ENCODE measurements at regions of chr12 and their contacts with region 1.

Region 1: DNA sequence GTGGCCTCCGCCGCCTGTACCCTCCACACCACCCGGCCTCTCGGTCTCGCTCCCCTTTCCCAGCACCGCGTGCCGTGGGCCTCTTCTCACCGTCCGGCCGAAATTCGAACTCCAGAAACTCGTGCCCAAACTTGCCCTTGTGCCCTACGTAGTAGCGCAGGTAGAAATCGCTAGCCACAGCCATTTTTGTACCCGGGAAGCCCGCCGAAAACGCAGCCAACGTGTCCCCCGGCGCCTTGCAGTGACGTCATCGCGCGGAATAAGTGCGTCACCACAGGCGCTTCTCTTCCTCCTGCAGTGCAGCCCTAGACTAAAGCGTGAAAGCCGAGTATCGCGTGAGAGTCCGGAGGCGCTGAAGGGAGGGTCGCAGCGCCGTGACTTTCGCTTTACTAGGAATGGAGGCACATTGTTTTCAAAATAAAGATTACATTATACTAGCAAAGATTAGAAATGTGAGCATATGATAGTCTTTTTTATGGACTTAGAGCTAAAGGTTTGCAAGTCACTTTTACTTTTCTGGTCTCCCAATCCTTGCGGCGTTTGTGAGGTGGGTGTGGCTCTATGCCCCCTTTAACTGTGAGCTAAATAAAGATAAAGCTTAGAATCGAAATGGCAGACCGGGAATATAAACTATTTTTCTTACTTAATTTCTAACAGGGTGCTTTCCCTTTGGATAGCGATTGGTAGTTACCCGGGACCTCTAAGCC is at the start of gene MAGOHB:
- DNase-seq: peak; percentile 97
- H3K4me3 Mint-ChIP-seq: peak within 1 kb of the TSS; percentile 97
- H3K27ac Mint-ChIP-seq: peak within 1 kb of the TSS; percentile 99
- H3K4me1 Mint-ChIP-seq: peaks cover 36% of the 10 kb centered on the region
- H3K27me3 Mint-ChIP-seq: peaks cover 16% of the 10 kb centered on the region
- total RNA-seq, gene MAGOHB: 79.4 and 85.1 TPM in 2 replicates

Region 2: DNA sequence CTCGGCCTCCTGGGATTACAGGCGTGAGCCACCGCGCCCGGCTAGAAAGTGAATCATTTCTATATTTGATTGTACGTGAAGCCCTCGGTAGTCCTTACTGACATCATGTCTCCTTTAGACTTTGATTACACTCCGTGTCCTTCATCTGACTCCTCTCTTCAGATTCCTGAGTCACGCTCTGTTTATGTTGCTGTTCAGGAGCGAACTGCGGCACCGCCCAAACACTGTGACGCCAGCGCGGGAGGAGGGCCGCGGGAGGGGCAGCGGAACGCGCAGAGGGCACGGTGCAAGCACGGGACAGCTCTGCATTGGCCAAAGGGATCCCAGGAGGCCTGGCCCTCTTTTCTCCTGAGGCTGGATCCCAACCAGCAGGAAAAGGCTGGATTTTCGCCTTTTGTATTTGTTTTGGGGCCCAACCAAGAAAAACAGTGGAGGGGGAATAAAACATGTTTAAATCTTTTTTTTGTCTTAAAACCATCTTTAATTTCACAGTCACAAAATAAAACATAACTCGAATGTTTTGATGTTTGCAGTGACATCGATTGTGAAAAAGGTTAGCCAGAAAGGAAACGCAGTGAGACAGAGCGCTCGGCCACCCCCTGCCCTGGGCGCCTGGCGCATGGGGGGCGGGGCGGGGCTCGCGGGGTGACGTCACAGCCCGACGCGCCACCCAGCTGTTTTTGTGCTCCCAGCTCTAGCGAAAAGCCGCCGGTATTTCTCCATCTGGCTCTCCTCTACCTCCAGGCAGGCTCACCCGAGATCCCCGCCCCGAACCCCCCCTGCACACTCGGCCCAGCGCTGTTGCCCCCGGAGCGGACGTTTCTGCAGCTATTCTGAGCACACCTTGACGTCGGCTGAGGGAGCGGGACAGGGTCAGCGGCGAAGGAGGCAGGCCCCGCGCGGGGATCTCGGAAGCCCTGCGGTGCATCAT is 401.0 kb before region 1 on chr12 and contains the start of gene GABARAPL1:
- intact Hi-C with region 1: loop called (anchors 2 kb)
- DNase-seq: peak; percentile 76
- H3K4me3 Mint-ChIP-seq: peak within 1 kb of the TSS; percentile 84
- H3K27ac Mint-ChIP-seq: peak within 1 kb of the TSS; percentile 93
- H3K4me1 Mint-ChIP-seq: peaks cover 32% of the 10 kb centered on the region
- H3K27me3 Mint-ChIP-seq: peaks cover 23% of the 10 kb centered on the region
- total RNA-seq, gene GABARAPL1: 5.0 and 6.6 TPM in 2 replicates

Region 3: DNA sequence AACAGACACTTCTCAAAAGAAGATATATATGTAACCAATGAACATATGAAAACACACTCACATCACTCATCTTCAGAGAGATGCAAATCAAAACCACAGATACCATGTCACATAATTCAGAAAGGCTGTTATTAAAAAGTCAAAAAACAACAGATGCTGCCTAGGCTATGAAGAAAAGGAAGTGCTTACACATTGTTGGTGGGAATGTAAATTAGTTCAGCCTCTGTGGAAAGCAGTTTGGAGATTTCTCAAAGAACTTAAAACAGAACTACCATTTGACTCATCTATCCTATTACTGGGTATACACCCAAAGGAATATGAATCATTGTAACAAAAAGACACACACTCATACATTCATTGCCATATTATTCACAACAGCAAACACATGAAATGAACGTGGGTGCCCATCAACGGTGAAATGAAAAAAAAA is 72.7 kb before region 1 on chr12:
- intact Hi-C with region 1: loop called (anchors 2 kb)
- DNase-seq: no peak
- H3K4me3 Mint-ChIP-seq: no peak overlapping the region
- H3K27ac Mint-ChIP-seq: peak overlapping the region; percentile 57
- H3K4me1 Mint-ChIP-seq: peaks cover 12% of the 10 kb centered on the region
- H3K27me3 Mint-ChIP-seq: peaks cover 5% of the 10 kb centered on the region

Region 4: GRCh38 chr12:10701131-10701681 is 87.7 kb after region 1 on chr12:
- intact Hi-C with region 1: loop called (anchors 1 kb)
- DNase-seq: no peak
- H3K4me3 Mint-ChIP-seq: peak overlapping the region; percentile 4
- H3K27ac Mint-ChIP-seq: peak overlapping the region; percentile 15
- H3K4me1 Mint-ChIP-seq: peaks cover 17% of the 10 kb centered on the region
- H3K27me3 Mint-ChIP-seq: no peaks in the 10 kb centered on the region

Region 5: DNA sequence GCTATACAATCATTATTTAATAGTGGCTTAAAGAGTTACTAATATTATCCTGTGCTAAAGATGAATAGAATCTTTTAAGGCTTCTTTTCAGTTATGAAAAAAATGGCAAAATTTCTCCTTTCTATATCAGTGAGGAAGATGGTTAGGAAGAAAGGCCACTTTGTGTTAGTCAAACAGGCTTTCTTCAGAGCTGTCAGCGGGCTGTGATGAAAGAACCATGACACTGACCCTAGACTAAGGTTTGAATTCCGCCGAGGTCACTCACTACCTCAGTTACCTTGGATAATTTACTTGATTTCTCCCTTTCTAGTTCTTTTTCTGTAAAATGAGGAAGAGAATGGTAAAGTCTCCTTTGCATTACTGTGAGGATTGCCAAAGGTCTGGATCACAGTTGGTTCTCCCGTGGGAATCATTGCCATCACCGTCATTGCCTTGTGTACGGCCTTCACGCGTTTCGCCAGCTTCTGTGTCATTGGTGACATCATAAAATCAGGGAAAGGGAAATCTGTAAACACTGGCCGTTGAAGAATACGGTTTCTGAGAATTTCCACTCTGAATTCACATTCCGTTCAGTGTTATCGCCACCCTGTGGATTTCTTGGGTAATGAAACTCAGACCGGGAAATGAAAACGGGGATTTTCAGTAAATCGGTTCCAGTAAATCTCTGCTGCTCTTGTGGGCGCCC is 136.3 kb after region 1 on chr12:
- intact Hi-C with region 1: loop called (anchors 1 kb)
- DNase-seq: peak; percentile 66
- H3K4me3 Mint-ChIP-seq: peak overlapping the region; percentile 62
- H3K27ac Mint-ChIP-seq: peak overlapping the region; percentile 34
- H3K4me1 Mint-ChIP-seq: peaks cover 36% of the 10 kb centered on the region
- H3K27me3 Mint-ChIP-seq: peaks cover 24% of the 10 kb centered on the region

Region 6: DNA sequence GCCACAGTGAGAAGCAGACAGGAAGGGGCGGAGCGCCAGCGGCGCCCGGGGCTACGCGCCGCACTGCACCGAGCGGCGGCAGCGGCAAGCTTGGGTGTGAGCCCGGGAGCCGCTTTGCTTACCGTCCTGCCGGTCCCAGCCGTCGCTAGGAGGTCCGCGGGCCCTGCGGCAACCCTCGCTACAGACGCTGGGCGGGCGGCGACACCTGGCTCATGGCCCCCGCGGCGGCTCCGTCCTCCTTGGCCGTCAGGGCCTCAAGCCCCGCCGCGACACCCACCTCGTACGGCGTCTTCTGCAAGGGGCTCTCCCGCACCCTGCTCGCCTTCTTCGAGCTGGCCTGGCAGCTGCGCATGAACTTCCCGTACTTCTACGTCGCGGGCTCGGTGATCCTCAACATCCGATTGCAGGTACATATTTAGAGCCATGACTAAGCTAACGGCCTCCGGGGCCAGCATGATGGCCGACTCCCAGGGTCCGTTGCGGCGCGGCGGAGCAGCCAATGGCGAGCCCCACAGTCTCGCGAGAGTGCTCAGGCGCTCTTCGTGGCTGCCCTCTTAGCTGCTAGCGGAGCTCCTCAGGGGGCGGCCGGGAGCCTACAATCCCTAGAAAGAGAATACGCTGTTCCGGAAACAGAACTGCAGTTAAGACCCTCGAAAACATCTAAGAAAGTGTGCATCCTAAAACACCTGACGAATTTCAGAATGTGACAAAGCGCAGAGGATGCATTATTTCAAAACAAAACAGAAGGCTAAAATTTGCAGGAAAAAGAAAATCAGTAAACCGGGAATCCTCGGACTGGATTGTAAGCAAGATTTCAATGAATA is 557.9 kb after region 1 on chr12 and contains the start of gene SMIM10L1:
- intact Hi-C with region 1: loop called (anchors 1 kb)
- DNase-seq: peak; percentile 86
- H3K4me3 Mint-ChIP-seq: peak within 1 kb of the TSS; percentile 99
- H3K27ac Mint-ChIP-seq: peak within 1 kb of the TSS; percentile 100
- H3K4me1 Mint-ChIP-seq: peaks cover 58% of the 10 kb centered on the region
- H3K27me3 Mint-ChIP-seq: no peaks in the 10 kb centered on the region
- total RNA-seq, gene SMIM10L1: 10.4 and 11.3 TPM in 2 replicates